Prostate gland (tissue), 2 donors: ENCODE measurements at regions of chr7 and their contacts with region 1.

Region 1: DNA sequence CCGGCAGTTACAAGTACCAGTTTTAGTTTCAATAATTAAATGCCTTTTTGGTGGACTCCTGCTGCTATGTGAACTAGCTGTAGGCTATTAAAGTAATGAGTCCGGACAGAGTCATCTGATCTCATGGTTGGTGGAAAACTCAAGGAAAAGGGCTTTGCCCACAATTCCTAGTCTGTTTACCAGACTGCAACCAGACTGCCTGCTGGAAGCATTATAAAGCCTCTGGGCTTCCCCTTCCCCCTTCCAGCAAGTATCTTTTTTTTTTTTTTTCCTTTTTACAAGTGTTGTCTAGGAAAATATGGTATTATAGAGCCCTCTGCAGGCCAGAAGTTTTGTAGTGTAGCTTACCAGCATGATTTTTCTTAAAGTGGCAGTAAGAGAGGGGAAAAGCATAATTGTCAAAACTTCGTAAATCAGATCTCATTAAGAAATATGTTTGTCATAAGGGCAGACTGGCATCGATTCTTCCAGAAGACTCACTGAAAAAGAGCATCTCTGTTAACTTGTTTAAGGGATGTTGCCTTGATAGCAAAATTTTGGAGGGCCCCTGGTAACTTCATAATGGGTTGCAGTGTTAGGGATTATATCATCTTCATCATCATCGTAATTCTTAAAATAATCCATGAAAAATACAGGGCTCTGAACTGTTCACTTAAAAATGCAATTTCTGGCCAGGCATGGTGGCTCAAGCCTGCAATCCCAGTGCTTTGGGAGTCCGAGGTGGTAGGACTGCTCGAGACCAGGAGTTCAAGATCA is 181.3 kb downstream of the TAX1BP1 start:
- DNase-seq: peak; percentile 66
- H3K4me3 ChIP-seq: no peak overlapping the region
- H3K27ac ChIP-seq: peak overlapping the region; percentile 14 to 18
- H3K4me1 ChIP-seq: no peaks in the 10 kb centered on the region
- H3K27me3 ChIP-seq: no peaks in the 10 kb centered on the region
- CTCF ChIP-seq: peak; percentile 13 to 80 (median 76)
- POLR2A ChIP-seq: no peak

Region 2: GRCh38 chr7:27196287-27196767 is 724.9 kb before region 1 on chr7:
- intact Hi-C with region 1: loop called (anchors 10 kb)
- DNase-seq: peak; percentile 95
- H3K4me3 ChIP-seq: peak overlapping the region; percentile 76 to 81
- H3K27ac ChIP-seq: peak overlapping the region; percentile 96 to 97
- H3K4me1 ChIP-seq: no peaks in the 10 kb centered on the region
- H3K27me3 ChIP-seq: no peaks in the 10 kb centered on the region
- CTCF ChIP-seq: peak; percentile 80 to 87 (median 84)
- POLR2A ChIP-seq: no peak

Region 3: GRCh38 chr7:27235387-27236311 is 685.6 kb before region 1 on chr7:
- intact Hi-C with region 1: loop called (anchors 5 kb)
- DNase-seq: peak; percentile 77
- H3K4me3 ChIP-seq: peak overlapping the region; percentile 48 to 54
- H3K27ac ChIP-seq: peak overlapping the region; percentile 55 to 56
- H3K4me1 ChIP-seq: no peaks in the 10 kb centered on the region
- H3K27me3 ChIP-seq: no peaks in the 10 kb centered on the region
- CTCF ChIP-seq: peak; percentile 39 to 78 (median 68)
- POLR2A ChIP-seq: peak; percentile 18

Region 4: DNA sequence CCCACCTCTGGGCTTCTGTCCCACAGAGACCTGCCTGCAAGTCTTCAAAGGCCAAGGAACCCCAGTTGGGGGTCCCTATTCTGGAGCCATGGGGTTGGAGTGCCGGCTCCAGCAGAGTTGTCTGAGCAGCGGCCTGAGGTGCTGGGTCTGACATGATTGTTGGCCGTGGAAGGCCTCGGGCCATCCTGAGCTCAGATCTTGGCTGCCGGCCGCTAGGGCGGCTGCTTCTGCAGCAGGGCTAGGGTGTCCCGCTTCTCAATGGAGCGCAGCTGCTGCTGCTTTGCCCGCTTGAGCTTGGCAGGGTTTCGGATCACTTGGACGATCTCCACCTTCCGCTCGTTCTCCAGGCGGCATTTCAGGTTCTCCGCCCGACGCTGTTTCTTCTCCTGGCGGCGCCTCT is 429.8 kb before region 1 on chr7:
- intact Hi-C with region 1: no loop called
- DNase-seq: no peak
- H3K4me3 ChIP-seq: no peak overlapping the region
- H3K27ac ChIP-seq: no peak overlapping the region
- H3K4me1 ChIP-seq: no peaks in the 10 kb centered on the region
- H3K27me3 ChIP-seq: no peaks in the 10 kb centered on the region
- CTCF ChIP-seq: no peak
- POLR2A ChIP-seq: no peak

Region 5: GRCh38 chr7:27576360-27576944 is 344.8 kb before region 1 on chr7:
- intact Hi-C with region 1: loop called (anchors 5 kb)
- DNase-seq: peak; percentile 47
- H3K4me3 ChIP-seq: no peak overlapping the region
- H3K27ac ChIP-seq: no peak overlapping the region
- H3K4me1 ChIP-seq: no peaks in the 10 kb centered on the region
- H3K27me3 ChIP-seq: no peaks in the 10 kb centered on the region
- CTCF ChIP-seq: peak; percentile 33 to 77 (median 71)
- POLR2A ChIP-seq: no peak

Region 6: DNA sequence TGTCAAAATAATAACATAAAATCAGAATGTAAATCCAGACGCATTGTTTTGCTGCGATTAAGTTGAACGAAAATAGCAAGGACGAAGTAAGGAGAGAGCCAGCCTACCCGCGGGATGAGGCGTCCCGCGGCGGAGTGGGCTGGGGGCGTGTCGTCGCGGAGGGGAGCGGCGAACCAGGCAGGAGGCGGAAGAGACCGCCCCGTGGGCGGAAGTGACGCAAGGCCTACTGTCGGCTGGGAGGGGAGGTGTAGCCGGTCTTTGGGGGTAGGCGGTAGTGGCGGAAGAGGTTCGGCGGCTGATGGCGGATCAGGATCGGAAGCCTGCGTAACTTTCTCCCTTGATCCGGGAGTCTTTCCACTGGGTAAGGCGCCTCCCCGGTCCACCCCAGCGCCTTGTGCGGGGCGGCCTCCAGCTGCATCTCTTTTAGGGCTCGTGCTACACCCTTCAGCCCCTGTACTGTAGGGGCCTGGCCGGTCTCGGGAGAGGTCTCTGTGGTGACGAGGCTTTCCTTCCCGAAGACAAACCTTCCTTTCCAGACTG is 181.3 kb before region 1 on chr7 and contains the start of gene TAX1BP1:
- intact Hi-C with region 1: loop called (anchors 10 kb)
- DNase-seq: peak; percentile 96
- H3K4me3 ChIP-seq: peak within 1 kb of the TSS; percentile 98 to 99
- H3K27ac ChIP-seq: peak within 1 kb of the TSS; percentile 99 to 100
- H3K4me1 ChIP-seq: no peaks in the 10 kb centered on the region
- H3K27me3 ChIP-seq: no peaks in the 10 kb centered on the region
- CTCF ChIP-seq: peak in 1 of 4 experiments; percentile 15
- POLR2A ChIP-seq: peak; percentile 100
- total RNA-seq, gene TAX1BP1: 105 to 125 TPM

Region 7: DNA sequence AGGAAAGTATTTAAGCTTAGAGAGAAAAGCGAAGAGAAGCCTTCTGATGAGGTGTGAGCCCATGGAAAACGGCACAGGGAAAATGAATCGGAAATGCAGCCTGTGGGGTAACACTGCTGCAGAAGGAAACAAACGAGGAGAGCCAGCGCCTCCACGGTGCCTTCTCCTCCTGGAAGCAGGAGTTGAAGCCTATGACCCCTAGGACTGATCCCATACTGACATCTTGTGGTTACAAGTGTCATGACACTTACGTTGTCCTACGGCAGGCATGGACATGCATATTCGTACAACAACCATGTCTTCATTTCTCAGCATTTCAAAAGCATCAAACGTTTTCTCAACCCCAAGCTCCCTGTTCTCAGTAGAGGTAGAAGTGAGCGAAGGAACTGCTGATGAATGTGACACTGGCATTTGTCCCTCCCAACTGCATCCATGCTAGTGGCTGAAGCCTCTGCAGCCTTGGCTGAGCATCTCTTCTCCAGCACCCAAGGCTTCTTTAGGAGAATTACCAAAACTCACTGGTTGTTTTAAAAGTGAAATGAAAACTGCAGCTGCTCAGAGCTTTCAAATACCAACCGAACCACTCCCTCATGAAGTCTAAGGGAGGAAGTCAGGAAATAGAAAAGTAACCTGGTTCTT is 99.2 kb after region 1 on chr7:
- intact Hi-C with region 1: loop called (anchors 5 kb)
- DNase-seq: peak; percentile 76
- H3K4me3 ChIP-seq: no peak overlapping the region
- H3K27ac ChIP-seq: no peak overlapping the region
- H3K4me1 ChIP-seq: no peaks in the 10 kb centered on the region
- H3K27me3 ChIP-seq: no peaks in the 10 kb centered on the region
- CTCF ChIP-seq: peak; percentile 59 to 91 (median 90)
- POLR2A ChIP-seq: no peak

Region 8: DNA sequence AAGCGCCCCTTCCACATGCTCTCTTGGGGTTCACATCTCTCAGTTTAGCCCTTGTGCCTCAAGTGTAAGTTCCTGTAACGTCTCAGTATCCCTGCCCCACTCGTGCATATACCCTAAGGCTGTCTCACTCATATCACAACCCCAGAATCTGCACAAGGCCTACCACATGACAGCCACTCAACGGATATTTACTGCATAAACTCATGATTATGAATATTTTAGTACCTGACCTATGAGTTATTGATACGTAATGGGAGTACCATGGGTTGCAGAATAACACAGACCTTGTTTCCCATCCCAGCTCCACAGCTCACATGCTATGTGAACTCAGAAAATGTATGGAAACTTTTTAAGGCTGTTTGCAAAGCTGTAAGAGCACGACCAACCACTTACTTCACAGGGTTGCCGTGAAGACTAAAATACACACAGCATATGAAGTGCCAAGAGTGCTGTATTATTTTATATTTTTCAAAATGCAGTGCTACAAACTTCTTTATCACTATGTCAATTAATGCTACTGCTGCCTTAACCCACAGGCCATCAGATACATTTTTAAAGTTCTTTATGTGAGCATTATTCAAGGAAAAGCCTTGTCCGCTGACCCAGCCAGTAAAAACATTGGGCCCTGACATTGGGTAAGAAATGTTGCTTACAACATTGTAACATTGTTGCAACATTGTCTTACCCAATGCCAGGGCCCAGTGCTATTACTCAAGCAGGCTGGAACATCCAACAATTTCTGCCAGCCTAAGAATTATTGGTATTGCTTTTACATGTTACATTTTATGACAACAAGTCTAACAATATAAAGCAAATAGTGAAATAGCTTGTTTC is 162.1 kb after region 1 on chr7:
- intact Hi-C with region 1: no loop called
- DNase-seq: peak; percentile 55
- H3K4me3 ChIP-seq: no peak overlapping the region
- H3K27ac ChIP-seq: no peak overlapping the region
- H3K4me1 ChIP-seq: peaks cover 4% of the 10 kb centered on the region
- H3K27me3 ChIP-seq: no peaks in the 10 kb centered on the region
- CTCF ChIP-seq: no peak
- POLR2A ChIP-seq: no peak